GM13977 (cell line): ENCODE measurements at regions of chr2 and their contacts with region 1.

Region 1: DNA sequence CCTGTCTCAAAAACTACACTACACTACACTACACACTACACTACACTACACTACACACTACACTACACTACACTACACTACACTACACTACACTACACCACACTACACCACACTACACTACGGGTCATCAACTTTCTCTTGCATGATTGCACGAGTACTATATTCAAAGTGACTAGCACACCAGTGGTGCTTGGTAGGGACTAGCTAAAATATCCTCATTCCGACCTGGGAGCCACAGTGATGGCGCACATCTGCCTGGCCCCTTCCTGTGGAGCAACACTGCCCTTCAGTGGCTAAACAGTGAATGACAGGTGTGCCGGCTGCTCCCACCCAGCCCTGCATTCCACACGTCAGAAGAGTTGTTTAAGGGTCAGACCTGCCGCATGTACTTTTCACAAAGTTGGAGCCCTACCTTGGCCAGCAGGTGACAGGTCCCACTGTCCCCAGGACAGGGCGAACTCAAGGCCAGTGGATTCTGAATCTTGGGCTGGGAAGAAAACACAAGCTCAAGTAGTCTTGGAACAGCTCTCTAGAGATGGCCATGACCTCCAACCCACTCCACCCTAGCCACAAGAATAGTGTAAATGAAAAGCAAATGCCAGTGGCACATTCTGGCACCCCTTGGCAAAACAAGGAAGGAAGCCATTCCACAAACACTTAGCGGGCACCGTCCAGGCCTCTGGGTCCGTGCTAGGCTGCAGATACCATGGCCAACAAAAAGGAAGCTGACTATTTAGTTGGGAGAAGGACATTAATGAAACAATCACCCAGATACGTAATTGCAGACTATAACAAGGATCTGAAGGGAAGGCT is 79.7 kb upstream of the MSH2 start:
- DNase-seq: peak; percentile 70
- CTCF ChIP-seq: peak; percentile 99

Region 2: GRCh38 chr2:46989491-46990230 is 333.6 kb before region 1 on chr2:
- in situ Hi-C with region 1: loop called (anchors 10 kb)
- DNase-seq: no peak
- CTCF ChIP-seq: no peak

Region 3: DNA sequence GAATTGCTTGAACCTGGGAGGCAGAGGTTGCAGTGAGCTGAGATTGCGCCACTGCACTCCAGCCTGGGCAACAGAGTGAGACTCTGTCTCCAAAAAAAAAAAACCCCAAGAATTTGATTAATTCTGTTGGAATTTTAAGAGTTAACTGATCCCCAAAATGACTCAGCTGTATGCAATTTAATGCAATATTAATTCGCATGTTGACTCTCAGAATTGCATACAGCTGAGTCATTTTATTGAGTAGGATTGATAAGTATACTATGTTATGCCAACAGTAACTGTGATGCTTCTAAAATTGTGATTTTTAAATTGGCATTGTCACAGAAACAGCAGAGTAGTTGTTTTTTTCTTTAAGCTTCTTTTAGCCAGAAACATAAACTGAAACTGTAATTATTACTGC is 99.3 kb after region 1 on chr2:
- in situ Hi-C with region 1: no loop called
- DNase-seq: no peak
- CTCF ChIP-seq: no peak